Left cardiac atrium (tissue), 4 donors: ENCODE measurements at regions of chr3 and their contacts with region 1.

Region 1: DNA sequence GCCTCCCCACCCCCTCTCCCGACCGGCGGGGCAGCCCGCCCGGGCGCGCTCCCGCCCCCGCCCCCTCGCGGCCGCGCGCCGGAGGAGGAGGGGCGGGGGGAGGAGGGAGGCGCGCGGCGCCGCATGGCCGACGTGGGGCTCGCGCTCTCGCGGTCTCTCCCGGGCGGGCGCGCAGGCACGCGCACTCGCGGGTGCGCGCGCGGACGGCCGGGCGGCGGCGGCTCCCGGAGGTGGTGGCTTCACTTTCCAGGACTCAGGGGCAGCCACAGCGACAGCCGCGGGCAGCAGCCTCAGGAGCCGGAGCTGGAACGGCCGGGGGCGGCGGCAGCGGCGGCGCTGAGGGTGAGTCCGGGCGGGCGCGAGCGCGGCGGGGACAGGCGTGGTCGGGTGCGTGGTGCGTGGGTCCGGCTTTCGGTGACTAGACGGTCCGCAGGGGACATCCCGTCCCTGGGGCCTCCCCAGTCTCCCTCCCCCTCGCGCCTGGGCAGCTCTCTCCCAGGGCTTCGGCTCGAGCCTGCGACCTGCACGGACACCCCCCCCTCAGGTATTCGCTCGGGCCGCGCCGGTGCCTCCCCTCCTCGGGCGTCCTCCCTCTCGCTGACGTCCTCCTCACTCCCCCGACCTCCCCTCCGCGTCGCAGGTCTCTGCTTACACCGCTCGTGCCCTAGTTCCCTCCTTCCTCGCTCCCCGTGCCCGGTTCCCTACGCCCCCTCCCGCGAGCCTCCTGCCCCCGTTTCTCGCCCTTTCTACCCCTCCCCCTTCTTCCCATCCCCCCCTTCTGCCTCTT is at the start of gene UBE2E2:
- DNase-seq: peak; percentile 79
- ATAC-seq: peak; percentile 93 to 95
- total RNA-seq, gene UBE2E2: 45.6 to 54.0 TPM

Region 2: GRCh38 chr3:23062587-23063302 is 140.4 kb before region 1 on chr3:
- intact Hi-C with region 1: no loop called
- DNase-seq: no peak
- ATAC-seq: no peak

Region 3: GRCh38 chr3:23805633-23806533 is 602.8 kb after region 1 on chr3 and contains the start of gene UBE2E1:
- intact Hi-C with region 1: loop called in 1 of 2 experiments (anchors 10 kb)
- DNase-seq: peak; percentile 86
- ATAC-seq: peak; percentile 78 to 82
- total RNA-seq, gene UBE2E1: 51.8 to 54.7 TPM